ENCODE measurements at regions of chr3 and their contacts with region 1.

Region 1: GRCh38 chr3:10366651-10367101 is 45.8 kb upstream of the SEC13 start:
- DNase-seq: peak; percentile 87
- H3K4me3 Mint-ChIP-seq: no peak overlapping the region
- H3K27ac Mint-ChIP-seq: peak overlapping the region; percentile 59
- H3K4me1 Mint-ChIP-seq: peaks cover 54% of the 10 kb centered on the region
- H3K27me3 Mint-ChIP-seq: peaks cover 18% of the 10 kb centered on the region

Region 2: DNA sequence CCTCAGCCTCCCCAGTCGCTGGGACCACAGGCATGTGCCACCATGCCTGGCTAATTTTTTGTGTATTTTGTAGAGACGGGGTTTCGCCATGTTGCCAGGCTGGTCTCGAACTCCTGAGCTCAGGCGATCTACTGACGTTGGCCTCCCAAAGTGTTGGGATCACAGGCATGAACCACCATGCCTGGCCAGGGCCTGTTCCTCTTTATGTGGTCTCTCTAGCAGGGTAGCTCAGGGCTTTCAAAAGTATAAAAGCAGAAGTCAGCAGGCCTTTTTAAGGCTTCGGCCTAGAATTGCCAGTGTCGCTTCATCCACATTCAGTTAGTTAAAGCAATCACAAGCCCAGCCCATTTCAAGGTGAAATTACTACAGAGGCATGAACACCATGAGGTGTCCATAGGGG is 217.4 kb before region 1 on chr3:
- CTCF ChIA-PET with region 1: no interaction called
- POLR2A ChIA-PET with region 1: no interaction called
- intact Hi-C with region 1: no loop called
- DNase-seq: no peak
- H3K4me3 Mint-ChIP-seq: no peak overlapping the region
- H3K27ac Mint-ChIP-seq: no peak overlapping the region
- H3K4me1 Mint-ChIP-seq: peaks cover 18% of the 10 kb centered on the region
- H3K27me3 Mint-ChIP-seq: no peaks in the 10 kb centered on the region

Region 3: DNA sequence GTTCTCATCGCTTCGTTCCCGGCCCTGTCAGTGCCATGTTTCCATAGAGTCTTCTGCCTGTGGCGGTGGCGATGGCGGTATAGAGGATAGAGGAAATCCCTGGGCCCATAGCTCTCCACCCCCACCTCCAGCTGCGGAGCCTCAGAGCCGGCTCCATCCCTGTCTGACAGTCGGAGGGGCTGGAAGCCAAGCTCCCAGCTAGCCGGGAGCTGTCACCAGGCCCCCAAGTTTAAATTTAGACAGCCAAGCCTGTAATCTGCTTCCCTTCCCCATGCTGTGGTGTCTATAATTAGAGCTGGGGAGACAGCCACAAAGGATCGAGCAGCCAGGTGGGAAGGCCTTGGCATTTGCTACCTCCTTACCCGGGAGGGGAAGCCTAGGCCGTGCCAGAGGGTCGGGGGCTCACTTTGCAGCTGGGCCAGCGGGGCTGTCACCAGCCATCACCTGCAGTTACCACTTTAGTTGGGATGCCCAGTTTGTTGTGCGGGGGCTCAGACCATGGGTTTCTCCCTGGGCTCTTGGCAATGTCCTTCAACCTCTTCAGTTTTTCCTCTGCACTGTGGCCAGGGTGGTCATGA is 10.6 kb after region 1 on chr3:
- CTCF ChIA-PET with region 1: no interaction called
- POLR2A ChIA-PET with region 1: no interaction called
- intact Hi-C with region 1: no loop called
- DNase-seq: no peak
- H3K4me3 Mint-ChIP-seq: no peak overlapping the region
- H3K27ac Mint-ChIP-seq: no peak overlapping the region
- H3K4me1 Mint-ChIP-seq: no peaks in the 10 kb centered on the region
- H3K27me3 Mint-ChIP-seq: no peaks in the 10 kb centered on the region

Region 4: GRCh38 chr3:10389995-10390394 is 23.3 kb after region 1 on chr3:
- CTCF ChIA-PET with region 1: no interaction called
- POLR2A ChIA-PET with region 1: no interaction called
- intact Hi-C with region 1: loop called (anchors 2 kb)
- DNase-seq: no peak
- H3K4me3 Mint-ChIP-seq: no peak overlapping the region
- H3K27ac Mint-ChIP-seq: no peak overlapping the region
- H3K4me1 Mint-ChIP-seq: peaks cover 34% of the 10 kb centered on the region
- H3K27me3 Mint-ChIP-seq: no peaks in the 10 kb centered on the region

Region 5: DNA sequence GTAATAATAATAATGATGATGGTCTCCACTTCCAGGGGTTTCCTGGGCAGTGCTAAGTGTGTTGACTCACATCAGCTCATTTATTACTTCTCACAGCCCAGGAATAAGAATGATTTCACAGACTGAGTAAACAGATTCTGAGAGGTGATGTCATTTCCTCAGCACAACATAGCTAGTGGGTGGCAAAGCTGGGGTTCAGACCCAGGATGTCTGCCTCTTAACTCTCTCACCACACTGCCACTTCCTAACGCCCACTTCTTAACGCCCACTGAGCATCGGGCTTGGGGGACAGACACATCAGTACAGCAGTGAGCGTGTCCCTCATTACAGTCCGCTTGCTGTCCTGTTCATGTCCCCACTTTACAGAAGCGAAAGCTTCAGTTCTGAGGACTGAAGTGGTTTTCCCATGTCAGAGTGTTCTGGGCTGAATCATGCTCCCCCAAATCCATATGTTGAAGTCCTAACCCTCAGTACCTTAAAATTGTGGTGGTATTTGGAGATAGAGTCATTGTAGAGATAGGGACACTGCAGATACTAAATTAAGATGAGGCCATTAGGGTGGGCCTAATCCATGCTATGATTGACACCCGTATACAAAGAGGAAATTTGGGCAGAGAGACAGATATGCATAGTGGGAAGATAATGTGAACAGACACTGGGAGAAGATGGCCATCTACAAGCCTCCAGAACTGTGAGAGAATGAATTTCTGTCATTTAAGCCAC is 70.8 kb after region 1 on chr3:
- CTCF ChIA-PET with region 1: no interaction called
- POLR2A ChIA-PET with region 1: no interaction called
- intact Hi-C with region 1: loop called (anchors 2 kb)
- DNase-seq: peak; percentile 85
- H3K4me3 Mint-ChIP-seq: no peak overlapping the region
- H3K27ac Mint-ChIP-seq: peak overlapping the region; percentile 36
- H3K4me1 Mint-ChIP-seq: peaks cover 30% of the 10 kb centered on the region
- H3K27me3 Mint-ChIP-seq: no peaks in the 10 kb centered on the region

Region 6: GRCh38 chr3:10551821-10552630 is 185.3 kb after region 1 on chr3:
- CTCF ChIA-PET with region 1: no interaction called
- POLR2A ChIA-PET with region 1: no interaction called
- intact Hi-C with region 1: loop called (anchors 10 kb)
- DNase-seq: peak; percentile 88
- H3K4me3 Mint-ChIP-seq: no peak overlapping the region
- H3K27ac Mint-ChIP-seq: peak overlapping the region; percentile 57
- H3K4me1 Mint-ChIP-seq: peaks cover 16% of the 10 kb centered on the region
- H3K27me3 Mint-ChIP-seq: peaks cover 10% of the 10 kb centered on the region

Region 7: GRCh38 chr3:10672422-10672821 is 305.7 kb after region 1 on chr3:
- CTCF ChIA-PET with region 1: no interaction called
- POLR2A ChIA-PET with region 1: no interaction called
- intact Hi-C with region 1: no loop called
- DNase-seq: no peak
- H3K4me3 Mint-ChIP-seq: no peak overlapping the region
- H3K27ac Mint-ChIP-seq: no peak overlapping the region
- H3K4me1 Mint-ChIP-seq: no peaks in the 10 kb centered on the region
- H3K27me3 Mint-ChIP-seq: peaks cover 4% of the 10 kb centered on the region

Region 8: DNA sequence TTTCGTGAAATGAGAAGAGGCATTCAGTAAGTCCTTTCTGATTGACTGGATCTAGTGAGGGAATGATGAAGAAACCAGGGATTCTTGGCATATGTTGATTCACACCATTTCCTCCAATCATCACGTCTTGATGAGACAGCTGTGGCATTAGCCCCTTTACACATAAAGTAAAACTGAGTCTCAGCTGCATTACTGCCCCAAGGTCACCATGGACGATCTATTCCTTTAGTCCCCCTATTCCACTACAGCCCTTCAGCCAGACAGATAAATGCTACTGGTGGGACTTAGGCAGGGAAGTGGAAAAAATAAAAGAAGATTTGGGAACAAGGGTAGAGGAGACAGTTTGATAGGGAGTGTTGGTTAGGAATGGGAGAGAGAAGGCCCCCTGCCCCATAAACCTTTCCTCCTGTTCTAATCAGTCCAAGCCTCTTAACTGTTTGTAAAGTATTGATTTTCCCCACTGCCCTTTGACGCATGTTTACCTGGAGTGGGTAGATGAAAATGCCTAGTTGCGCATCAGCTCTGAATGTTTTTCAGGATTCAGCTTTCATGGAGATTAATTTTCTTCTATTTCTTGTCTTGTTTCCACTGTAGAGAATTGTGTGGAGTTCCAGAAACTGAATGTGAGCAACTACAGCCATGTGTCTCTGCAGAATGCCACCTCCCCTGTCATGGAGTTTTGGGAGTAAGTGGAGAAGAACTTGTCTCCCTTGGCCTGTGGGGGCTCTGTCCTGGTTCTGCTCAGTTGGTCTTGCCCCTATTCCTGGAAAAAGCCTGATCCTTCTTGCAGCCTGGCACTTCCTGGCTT is 456.2 kb after region 1 on chr3:
- CTCF ChIA-PET with region 1: no interaction called
- POLR2A ChIA-PET with region 1: no interaction called
- intact Hi-C with region 1: no loop called
- DNase-seq: no peak
- H3K4me3 Mint-ChIP-seq: no peak overlapping the region
- H3K27ac Mint-ChIP-seq: no peak overlapping the region
- H3K4me1 Mint-ChIP-seq: no peaks in the 10 kb centered on the region
- H3K27me3 Mint-ChIP-seq: peaks cover 9% of the 10 kb centered on the region

Region 9: DNA sequence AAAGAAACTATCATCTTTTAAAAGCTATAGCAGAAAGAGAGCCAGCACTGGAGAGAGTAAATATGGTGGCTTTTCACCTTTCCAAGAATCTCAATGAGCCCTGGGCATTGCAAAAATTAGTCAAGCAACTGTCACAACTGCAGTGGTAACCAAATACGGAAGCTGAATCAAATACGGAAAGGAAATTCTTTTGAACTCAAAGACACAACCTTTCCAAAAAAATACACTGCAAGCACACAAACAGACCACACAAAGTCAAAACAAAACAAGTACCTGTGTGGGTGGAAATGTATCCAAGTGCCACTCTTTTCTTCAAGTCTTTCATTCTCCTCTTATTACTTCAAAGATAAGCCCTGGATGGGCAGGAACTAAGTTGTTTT is 1259.4 kb after region 1 on chr3:
- CTCF ChIA-PET with region 1: no interaction called
- POLR2A ChIA-PET with region 1: no interaction called
- intact Hi-C with region 1: loop called (anchors 10 kb)
- DNase-seq: peak; percentile 38
- H3K4me3 Mint-ChIP-seq: no peak overlapping the region
- H3K27ac Mint-ChIP-seq: peak overlapping the region; percentile 4
- H3K4me1 Mint-ChIP-seq: peaks cover 59% of the 10 kb centered on the region
- H3K27me3 Mint-ChIP-seq: peaks cover 1% of the 10 kb centered on the region